BJ (cell line): ENCODE measurements at regions of chr14 and their contacts with region 1.

Region 1: DNA sequence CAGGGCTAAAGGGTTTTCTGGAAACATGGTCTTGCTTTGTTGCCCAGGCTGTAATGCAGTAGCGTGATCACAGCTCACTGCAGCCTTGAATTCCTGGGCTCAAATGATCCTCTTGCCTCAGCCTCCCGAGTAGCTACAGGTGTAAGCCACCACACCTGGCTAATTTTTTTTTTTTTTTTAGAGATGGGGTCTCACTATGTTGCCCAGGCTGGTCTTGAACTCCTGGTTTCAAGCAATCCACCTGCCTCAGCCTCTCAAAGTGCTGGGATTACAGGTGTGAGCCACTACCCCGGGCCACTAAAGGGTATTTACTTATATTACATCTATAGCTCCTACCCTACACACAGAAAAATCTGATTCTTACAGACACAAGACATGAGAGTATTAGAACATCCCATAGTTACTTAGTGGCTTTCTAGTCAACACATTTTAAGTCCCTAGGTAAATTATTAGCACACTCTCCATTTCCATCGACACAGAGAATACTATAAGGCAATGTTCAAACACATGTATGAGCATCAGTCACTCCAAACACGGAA is 6.2 kb upstream of the DCAF11 start:
- DNase-seq: no peak
- H3K4me3 ChIP-seq: no peak overlapping the region
- H3K27me3 ChIP-seq: no peaks in the 10 kb centered on the region
- CTCF ChIP-seq: no peak

Region 2: DNA sequence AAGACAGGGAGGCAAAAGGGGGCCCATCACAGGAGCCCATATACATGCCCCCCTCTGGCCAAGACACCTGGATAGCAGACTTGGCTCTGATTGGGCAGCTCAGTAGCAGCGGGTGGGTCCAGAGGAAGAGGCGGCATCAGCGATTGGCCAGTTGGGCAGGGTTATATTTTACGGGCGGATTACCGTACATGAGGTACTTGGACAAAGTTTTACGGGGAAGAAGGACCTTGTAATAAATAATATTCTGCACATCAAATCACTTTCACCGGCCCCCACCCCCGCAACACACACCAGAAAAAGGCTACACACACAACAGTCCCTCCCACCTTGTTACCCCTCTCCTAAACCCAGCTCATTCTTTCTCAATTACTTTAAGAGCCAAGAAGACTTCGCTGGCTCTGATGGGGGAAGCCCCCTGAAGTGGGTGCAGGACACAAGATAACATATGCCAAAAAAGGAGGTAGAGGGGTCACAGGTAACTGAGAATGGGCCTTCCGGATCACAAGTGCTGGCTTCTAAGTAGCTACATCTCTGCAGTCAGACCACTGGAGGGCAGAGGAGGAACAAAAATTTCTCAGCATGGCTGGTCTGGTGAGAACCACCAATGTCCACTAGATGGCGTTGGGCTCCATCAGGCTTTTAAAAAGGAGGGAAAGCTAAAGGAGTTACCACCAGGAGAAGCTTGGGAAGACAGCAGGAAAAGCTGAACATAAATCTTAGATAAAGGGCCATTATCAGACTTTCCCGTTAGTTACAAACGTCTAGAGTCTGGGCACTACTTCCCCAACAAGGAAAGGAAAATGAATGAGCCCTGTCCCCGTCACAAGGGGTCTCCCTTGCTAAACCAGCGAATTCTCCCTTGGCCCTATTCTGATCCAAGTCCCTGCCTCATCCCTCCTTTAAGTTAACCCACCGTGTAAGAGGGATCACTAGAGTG is 1039.7 kb before region 1 on chr14:
- CTCF ChIA-PET with region 1: no interaction called
- POLR2A ChIA-PET with region 1: no interaction called
- DNase-seq: peak; percentile 70
- H3K4me3 ChIP-seq: no peak overlapping the region
- H3K27me3 ChIP-seq: no peaks in the 10 kb centered on the region
- CTCF ChIP-seq: peak; percentile 99

Region 3: DNA sequence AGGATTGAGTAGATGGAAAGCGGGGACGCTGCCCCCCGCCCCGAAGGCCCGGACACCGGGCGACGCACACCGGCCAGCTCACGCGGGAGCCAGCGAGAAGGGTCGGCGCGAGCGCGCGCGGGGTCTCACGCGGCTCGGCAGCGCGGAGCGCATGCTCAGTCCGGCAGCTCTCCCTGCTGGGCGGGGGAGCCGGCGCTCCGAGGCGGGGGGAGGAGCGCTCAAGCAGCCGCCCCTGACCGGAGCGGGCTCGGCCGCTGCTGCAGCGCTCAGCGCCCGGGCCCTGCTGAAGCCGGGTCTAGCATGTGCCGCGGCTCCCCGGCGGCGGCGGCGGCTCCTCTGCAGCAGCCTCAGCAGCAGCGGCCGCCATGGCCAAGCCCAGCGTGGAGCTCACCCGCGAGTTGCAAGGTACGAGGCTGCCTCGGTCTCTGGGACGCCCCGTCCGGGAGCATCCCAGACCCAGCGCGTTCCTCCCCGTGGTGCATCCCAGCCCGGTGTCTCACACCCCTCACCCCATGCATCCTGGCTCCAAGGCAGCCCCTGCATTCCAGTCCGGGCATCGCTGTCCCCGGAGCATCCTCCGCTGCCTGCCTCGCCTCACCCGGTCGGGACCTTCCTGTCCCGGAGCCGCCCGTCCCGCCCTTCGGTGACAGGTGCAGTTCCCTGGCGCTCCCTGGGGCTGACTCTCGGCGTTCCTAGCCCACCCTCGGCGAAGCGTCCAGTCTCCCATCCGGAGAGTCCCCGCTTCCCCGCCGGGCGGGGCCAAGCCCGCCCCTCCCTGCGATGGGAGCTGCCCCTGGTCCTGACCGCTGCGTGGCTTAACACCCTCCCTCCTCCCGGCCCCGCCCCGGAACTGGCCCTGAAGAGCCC is 56.4 kb before region 1 on chr14 and contains the start of gene CARMIL3:
- CTCF ChIA-PET with region 1: interaction called, 66 read pairs
- POLR2A ChIA-PET with region 1: no interaction called
- DNase-seq: no peak
- H3K4me3 ChIP-seq: peak within 1 kb of the TSS; percentile 48
- H3K27me3 ChIP-seq: peaks cover 15% of the 10 kb centered on the region
- CTCF ChIP-seq: no peak
- polyA plus RNA-seq, gene CARMIL3: 0.02 and 0.04 TPM in 2 replicates

Region 4: GRCh38 chr14:24093901-24094761 is 14.3 kb before region 1 on chr14 and contains the start of gene PCK2:
- CTCF ChIA-PET with region 1: interaction called, 136 read pairs
- POLR2A ChIA-PET with region 1: interaction called, 4 read pairs
- DNase-seq: peak; percentile 84
- H3K4me3 ChIP-seq: peak within 1 kb of the TSS; percentile 82
- H3K27me3 ChIP-seq: no peaks in the 10 kb centered on the region
- CTCF ChIP-seq: peak; percentile 21; the same call in 1 of the 2 replicates
- polyA plus RNA-seq, gene PCK2: 141 and 227 TPM in 2 replicates

Region 5: DNA sequence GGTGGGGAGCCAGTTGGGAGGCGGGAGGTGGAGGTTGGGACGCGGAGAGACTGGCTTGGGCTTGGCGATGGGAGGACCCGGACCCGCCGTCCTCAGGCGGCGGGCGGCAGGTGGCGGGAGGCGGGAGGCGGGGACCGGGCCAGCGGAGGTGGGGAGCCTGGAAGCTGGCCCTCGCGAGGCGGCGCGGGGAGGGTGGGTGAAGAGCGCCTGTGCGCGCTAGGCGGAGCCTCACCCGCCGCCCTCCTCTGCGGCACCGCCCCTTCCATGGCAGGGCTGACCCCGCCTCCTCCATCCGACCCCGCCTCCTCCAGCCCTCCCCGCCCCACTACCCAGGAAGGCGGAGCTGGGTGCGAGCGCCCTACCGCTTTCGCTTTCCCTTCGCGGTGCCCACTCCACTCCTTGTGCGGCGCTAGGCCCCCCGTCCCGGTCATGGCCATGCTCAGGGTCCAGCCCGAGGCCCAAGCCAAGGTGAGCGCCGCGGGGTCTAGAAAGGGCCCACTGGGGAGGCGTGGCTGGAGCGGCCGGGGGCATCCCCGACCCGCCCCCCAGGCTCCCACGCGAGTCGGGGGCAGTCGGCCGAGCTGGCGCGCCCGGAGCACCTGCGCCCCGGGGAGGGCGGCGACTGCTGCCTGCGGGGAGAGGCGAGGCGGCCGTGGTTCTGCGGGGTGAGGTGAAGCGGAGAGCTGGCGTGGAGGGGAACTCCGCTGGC is 27.6 kb after region 1 on chr14 and contains the start of gene PSME1:
- CTCF ChIA-PET with region 1: interaction called, 13 read pairs
- POLR2A ChIA-PET with region 1: no interaction called
- DNase-seq: peak; percentile 32
- H3K4me3 ChIP-seq: peak within 1 kb of the TSS; percentile 86
- H3K27me3 ChIP-seq: no peaks in the 10 kb centered on the region
- CTCF ChIP-seq: no peak
- polyA plus RNA-seq, gene PSME1: 48.9 and 106 TPM in 2 replicates